Naive thymus-derived CD4-positive, alpha-beta T cell (primary cell): ENCODE measurements at regions of chr19 and their contacts with region 1.

Region 1: DNA sequence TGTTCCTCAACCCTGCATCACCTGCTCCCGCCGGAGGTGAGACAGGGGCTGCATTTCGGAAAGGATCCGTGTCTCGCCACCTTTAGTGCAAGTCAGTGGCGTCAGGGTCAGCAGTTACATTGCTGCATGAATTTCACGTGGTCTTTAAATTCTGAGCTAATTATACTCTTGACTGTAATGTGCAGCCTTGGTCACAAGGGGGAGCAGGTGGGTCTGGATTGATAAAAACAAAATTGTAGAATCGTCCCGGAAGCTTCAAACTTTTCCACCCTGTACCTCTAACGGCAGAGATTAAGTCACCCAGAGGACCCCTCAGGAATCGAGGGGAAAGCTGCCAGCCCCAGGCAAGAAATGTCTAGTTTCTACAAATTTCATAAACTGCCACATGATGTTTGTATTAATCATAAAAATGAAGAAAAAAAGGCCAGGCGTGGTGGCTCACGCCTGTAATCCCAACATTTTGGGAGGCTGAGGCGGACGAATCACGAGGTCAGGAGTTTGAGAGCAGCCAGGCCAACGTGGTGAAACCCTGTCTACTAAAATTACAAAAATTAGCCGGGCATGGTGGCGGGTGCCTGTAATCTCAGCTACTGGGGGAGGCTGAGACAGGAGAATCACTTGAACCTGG is 20.2 kb downstream of the BBC3 start:
- DNase-seq: peak; percentile 51 to 83 (median 76)
- ATAC-seq: peak; percentile 97
- H3K4me3 ChIP-seq: no peak overlapping the region
- H3K4me3 Mint-ChIP-seq: peak overlapping the region in 8 of 10 donors; percentile 5 to 53 (median 18)
- H3K27ac ChIP-seq: peak overlapping the region; percentile 49
- H3K27ac Mint-ChIP-seq: peak overlapping the region; percentile 55 to 88 (median 82)
- H3K4me1 ChIP-seq: peaks cover 8 to 10% of the 10 kb centered on the region in 2 donors
- H3K4me1 Mint-ChIP-seq: peaks cover 8 to 30% (median 14%) of the 10 kb centered on the region in 7 donors
- H3K27me3 ChIP-seq: no peaks in the 10 kb centered on the region
- H3K27me3 Mint-ChIP-seq: no peaks in the 10 kb centered on the region

Region 2: GRCh38 chr19:47130591-47131227 is 80.1 kb before region 1 on chr19 and contains the start of gene SAE1:
- CTCF ChIA-PET with region 1: interaction called, 13 read pairs
- POLR2A ChIA-PET with region 1: interaction called, 4 read pairs
- intact Hi-C with region 1: loop called in 1 of 2 experiments (anchors 1 kb)
- DNase-seq: peak; percentile 84 to 97 (median 91)
- ATAC-seq: peak; percentile 94
- H3K4me3 ChIP-seq: peak within 1 kb of the TSS; percentile 98
- H3K4me3 Mint-ChIP-seq: peak within 1 kb of the TSS; percentile 92 to 100 (median 99)
- H3K27ac ChIP-seq: peak within 1 kb of the TSS; percentile 85
- H3K27ac Mint-ChIP-seq: peak within 1 kb of the TSS; percentile 87 to 97 (median 92)
- H3K4me1 ChIP-seq: peaks cover 11 to 25% of the 10 kb centered on the region in 2 donors
- H3K4me1 Mint-ChIP-seq: peaks cover 44 to 57% (median 52%) of the 10 kb centered on the region in 7 donors
- H3K27me3 ChIP-seq: no peaks in the 10 kb centered on the region
- H3K27me3 Mint-ChIP-seq: peaks cover 0 to 7% (median 0%) of the 10 kb centered on the region in 5 donors
- total RNA-seq, gene SAE1: 34.3 to 115 (median 46.4) TPM

Region 3: GRCh38 chr19:47152224-47153017 is 58.4 kb before region 1 on chr19:
- CTCF ChIA-PET with region 1: interaction called, 53 read pairs
- POLR2A ChIA-PET with region 1: interaction called, 23 read pairs
- intact Hi-C with region 1: loop called (anchors 1 kb)
- DNase-seq: no peak
- ATAC-seq: no peak
- H3K4me3 ChIP-seq: no peak overlapping the region
- H3K4me3 Mint-ChIP-seq: no peak overlapping the region
- H3K27ac ChIP-seq: no peak overlapping the region
- H3K27ac Mint-ChIP-seq: peak overlapping the region in 3 of 9 donors; percentile 60 to 88 (median 61)
- H3K4me1 ChIP-seq: peaks cover 24 to 53% of the 10 kb centered on the region in 2 donors
- H3K4me1 Mint-ChIP-seq: peaks cover 26 to 75% (median 61%) of the 10 kb centered on the region in 7 donors
- H3K27me3 ChIP-seq: no peaks in the 10 kb centered on the region
- H3K27me3 Mint-ChIP-seq: no peaks in the 10 kb centered on the region

Region 4: DNA sequence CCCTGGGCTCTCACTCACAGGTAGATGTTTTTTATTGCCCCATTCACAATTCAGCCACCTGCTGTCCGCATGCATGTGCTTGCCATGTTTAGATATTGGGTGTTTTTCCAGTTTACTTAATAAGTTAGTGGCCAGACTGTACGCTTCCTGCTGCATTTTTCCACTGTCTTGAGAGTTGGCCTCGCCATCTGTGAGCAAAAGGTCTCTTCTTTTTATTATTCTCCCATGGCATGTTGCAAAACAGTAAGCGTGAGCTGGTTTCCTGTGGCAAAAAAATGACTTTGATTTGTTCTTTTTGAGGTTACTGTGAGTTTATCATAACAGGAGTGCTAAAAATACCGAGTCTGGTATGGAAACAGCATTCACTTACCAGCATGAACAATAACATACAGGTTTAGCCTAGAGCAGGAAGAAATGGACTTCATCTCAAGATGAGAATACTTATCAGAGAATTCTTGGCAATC is 34.1 kb before region 1 on chr19:
- CTCF ChIA-PET with region 1: interaction called, 13 read pairs
- POLR2A ChIA-PET with region 1: interaction called, 10 read pairs
- intact Hi-C with region 1: no loop called
- DNase-seq: peak in 8 of 9 donors; percentile 44 to 83 (median 79)
- ATAC-seq: peak; percentile 90
- H3K4me3 ChIP-seq: peak overlapping the region; percentile 28
- H3K4me3 Mint-ChIP-seq: peak overlapping the region; percentile 73 to 89 (median 81)
- H3K27ac ChIP-seq: peak overlapping the region; percentile 58
- H3K27ac Mint-ChIP-seq: peak overlapping the region; percentile 87 to 98 (median 96)
- H3K4me1 ChIP-seq: peaks cover 40 to 55% of the 10 kb centered on the region in 2 donors
- H3K4me1 Mint-ChIP-seq: peaks cover 40 to 85% (median 76%) of the 10 kb centered on the region in 7 donors
- H3K27me3 ChIP-seq: no peaks in the 10 kb centered on the region
- H3K27me3 Mint-ChIP-seq: no peaks in the 10 kb centered on the region

Region 5: DNA sequence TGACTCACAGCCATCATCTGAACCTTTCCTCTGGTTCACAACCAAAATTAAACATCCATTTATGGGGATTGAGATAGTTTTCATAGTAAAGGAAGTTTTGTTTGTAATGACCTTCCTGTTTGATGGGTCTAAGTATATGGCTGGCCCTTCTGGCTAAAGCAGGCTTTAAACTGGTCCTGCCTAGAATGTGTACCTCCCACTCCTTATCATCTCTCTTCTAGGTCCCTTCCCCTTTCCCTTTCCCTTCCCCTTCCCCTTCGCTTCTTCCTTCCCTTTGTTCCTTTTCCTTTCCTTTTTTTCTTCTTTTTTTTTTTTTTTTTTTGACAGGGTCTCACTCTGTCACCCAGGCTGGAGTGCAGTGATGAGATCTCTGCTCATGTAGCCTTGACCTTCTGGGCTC is 15.4 kb before region 1 on chr19:
- CTCF ChIA-PET with region 1: interaction called, 47 read pairs
- POLR2A ChIA-PET with region 1: interaction called, 6 read pairs
- intact Hi-C with region 1: no loop called
- DNase-seq: no peak
- ATAC-seq: no peak
- H3K4me3 ChIP-seq: no peak overlapping the region
- H3K4me3 Mint-ChIP-seq: no peak overlapping the region
- H3K27ac ChIP-seq: no peak overlapping the region
- H3K27ac Mint-ChIP-seq: peak overlapping the region in 2 of 9 donors; percentile 55 to 78
- H3K4me1 ChIP-seq: peaks cover 3 to 26% of the 10 kb centered on the region in 2 donors
- H3K4me1 Mint-ChIP-seq: peaks cover 19 to 51% (median 43%) of the 10 kb centered on the region in 7 donors
- H3K27me3 ChIP-seq: no peaks in the 10 kb centered on the region
- H3K27me3 Mint-ChIP-seq: no peaks in the 10 kb centered on the region

Region 6: GRCh38 chr19:47231215-47231984 is 20.6 kb after region 1 on chr19:
- CTCF ChIA-PET with region 1: interaction called, 9 read pairs
- POLR2A ChIA-PET with region 1: interaction called, 59 read pairs
- intact Hi-C with region 1: loop called (anchors 1 kb)
- DNase-seq: peak; percentile 77 to 94 (median 86)
- ATAC-seq: peak; percentile 78
- H3K4me3 ChIP-seq: peak overlapping the region; percentile 54
- H3K4me3 Mint-ChIP-seq: peak overlapping the region in 9 of 10 donors; percentile 69 to 88 (median 81)
- H3K27ac ChIP-seq: peak overlapping the region; percentile 80
- H3K27ac Mint-ChIP-seq: peak overlapping the region; percentile 20 to 92 (median 90)
- H3K4me1 ChIP-seq: peaks cover 36 to 45% of the 10 kb centered on the region in 2 donors
- H3K4me1 Mint-ChIP-seq: peaks cover 20 to 29% (median 24%) of the 10 kb centered on the region in 7 donors
- H3K27me3 ChIP-seq: no peaks in the 10 kb centered on the region
- H3K27me3 Mint-ChIP-seq: peaks cover 0 to 4% (median 0%) of the 10 kb centered on the region in 5 donors